Cardiac septum (tissue), 1 donor: ENCODE measurements at regions of chr7 and their contacts with region 1.

Region 1: GRCh38 chr7:85882335-85882734 is 695.5 kb upstream of the SEMA3D start:
- DNase-seq: no peak

Region 2: GRCh38 chr7:86469680-86470295 is 587.5 kb after region 1 on chr7:
- intact Hi-C with region 1: loop called (anchors 10 kb)
- DNase-seq: no peak